Ascending aorta (tissue), 2 donors: ENCODE measurements at regions of chr1 and their contacts with region 1.

Region 1: GRCh38 chr1:54810100-54810942 is 9.2 kb upstream of the TTC22 start:
- DNase-seq: peak in 1 of 2 donors; percentile 69
- H3K4me3 ChIP-seq: no peak overlapping the region
- H3K27ac ChIP-seq: no peak overlapping the region
- H3K4me1 ChIP-seq: no peaks in the 10 kb centered on the region
- H3K27me3 ChIP-seq: no peaks in the 10 kb centered on the region
- CTCF ChIP-seq: peak; percentile 61 to 89 (median 79)

Region 2: GRCh38 chr1:54070171-54070837 is 740.0 kb before region 1 on chr1:
- intact Hi-C with region 1: loop called (anchors 2 kb)
- DNase-seq: no peak
- H3K4me3 ChIP-seq: no peak overlapping the region
- H3K27ac ChIP-seq: no peak overlapping the region
- H3K4me1 ChIP-seq: no peaks in the 10 kb centered on the region
- H3K27me3 ChIP-seq: no peaks in the 10 kb centered on the region
- CTCF ChIP-seq: peak; percentile 50 to 79 (median 57)